ENCODE measurements at regions of chr2 and their contacts with region 1.

Region 1: GRCh38 chr2:174473796-174474195 is 13.0 kb downstream of the GPR155 start:
- DNase-seq: no peak
- CTCF ChIP-seq: no peak

Region 2: GRCh38 chr2:174487108-174487819 is 13.5 kb after region 1 on chr2:
- CTCF ChIA-PET with region 1: interaction called, 15 read pairs
- POLR2A ChIA-PET with region 1: no interaction called
- DNase-seq: peak; percentile 99
- CTCF ChIP-seq: no peak

Measured in GM10248 (cell line).